Upper lobe of right lung (tissue), 1 donor: ENCODE measurements at regions of chr17 and their contacts with region 1.

Region 1: DNA sequence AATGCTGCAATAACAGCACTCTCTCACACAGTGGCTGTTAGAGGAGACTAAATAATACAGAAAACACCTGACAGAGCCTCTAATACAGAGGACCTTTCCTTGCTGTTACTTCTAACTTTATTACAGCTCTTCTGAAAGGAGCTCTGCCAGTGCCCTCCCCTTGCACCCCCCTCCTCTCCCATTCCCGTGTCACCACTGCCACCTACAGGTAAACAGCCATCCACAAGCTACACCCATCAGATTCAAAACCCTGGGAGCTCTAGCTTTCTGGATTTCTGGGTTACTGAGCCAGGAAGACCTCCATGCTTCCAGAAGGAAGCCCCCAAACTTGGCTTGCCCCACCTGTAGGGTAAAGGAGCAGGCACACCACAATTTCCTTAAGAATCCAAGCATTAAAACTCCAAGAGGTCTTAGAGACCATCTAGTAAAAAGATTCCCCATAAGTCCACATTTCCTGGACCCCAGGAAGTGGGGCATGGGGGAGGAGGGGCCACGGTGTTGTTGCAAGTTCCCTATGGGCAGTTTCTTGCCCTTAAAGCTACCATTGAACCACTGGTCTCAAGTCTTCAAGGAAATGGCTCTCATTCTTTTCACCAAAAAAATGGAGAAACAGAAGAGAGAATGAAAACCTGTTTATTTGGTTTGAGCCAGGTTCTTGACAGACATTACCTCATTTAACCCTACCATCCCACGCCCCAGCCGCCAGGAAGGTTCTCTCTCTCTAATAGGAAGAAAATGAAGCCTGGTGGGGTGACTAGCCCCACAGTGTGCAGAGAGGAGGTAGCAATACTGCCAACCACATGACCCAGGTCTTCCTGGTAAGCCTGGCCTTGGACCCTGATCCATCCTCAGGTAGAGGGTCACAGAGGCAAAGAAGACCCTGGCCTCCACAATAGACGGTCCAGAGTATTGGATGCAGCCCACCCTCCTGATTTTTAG is 52.8 kb downstream of the TOM1L2 start:
- DNase-seq: peak; percentile 80
- ATAC-seq: peak; percentile 90
- H3K4me3 ChIP-seq: no peak overlapping the region
- H3K27ac ChIP-seq: no peak overlapping the region
- H3K4me1 ChIP-seq: peaks cover 28% of the 10 kb centered on the region
- H3K27me3 ChIP-seq: no peaks in the 10 kb centered on the region
- CTCF ChIP-seq: peak; percentile 72

Region 2: DNA sequence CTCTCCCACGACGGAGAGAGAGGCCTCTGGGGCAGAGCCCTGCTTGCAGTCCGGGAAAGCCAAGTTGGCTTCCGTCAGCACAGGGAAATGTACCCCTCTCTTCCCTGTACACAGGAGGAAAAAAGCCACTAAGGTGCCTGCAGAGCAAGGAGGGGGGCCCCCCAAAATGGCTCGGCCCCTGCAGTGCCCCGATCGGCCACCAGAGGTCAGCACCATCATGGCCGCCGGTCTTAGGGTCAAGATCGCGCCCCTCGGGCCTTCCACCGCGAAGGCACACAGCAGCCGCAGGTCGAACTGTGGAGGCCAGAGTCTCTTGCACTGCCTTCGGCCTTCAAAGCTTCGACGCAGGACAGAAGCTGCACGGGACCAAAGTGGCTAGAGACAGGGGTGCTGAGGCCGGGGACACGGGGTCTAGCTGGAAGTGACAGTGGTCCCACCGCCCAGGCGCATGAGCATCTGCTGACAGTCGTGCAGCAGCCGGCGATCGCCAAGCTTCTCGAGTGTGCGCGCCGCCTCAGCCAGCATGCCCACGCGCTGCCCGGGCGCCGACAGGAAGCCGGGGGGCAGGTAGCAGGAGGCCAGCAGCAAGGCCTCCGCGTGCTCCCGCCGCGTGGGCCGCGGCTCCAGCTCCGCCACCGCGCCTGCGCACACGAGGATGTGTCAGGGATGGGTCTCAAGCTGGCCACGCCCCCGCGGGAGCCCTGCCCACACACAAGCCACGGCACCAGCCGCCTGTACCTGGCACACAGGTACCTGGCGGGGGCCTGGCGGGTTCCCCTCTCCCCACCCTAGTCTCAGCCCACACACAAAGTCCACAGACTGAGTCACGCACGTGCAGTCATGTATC is 107.0 kb before region 1 on chr17:
- intact Hi-C with region 1: loop called (anchors 10 kb)
- DNase-seq: peak; percentile 86
- ATAC-seq: peak; percentile 83
- H3K4me3 ChIP-seq: no peak overlapping the region
- H3K27ac ChIP-seq: peak overlapping the region; percentile 42
- H3K4me1 ChIP-seq: peaks cover 5% of the 10 kb centered on the region
- H3K27me3 ChIP-seq: no peaks in the 10 kb centered on the region
- CTCF ChIP-seq: peak; percentile 100